Common myeloid progenitor, CD34-positive (primary cell): ENCODE measurements at regions of chr13 and their contacts with region 1.

Region 1: DNA sequence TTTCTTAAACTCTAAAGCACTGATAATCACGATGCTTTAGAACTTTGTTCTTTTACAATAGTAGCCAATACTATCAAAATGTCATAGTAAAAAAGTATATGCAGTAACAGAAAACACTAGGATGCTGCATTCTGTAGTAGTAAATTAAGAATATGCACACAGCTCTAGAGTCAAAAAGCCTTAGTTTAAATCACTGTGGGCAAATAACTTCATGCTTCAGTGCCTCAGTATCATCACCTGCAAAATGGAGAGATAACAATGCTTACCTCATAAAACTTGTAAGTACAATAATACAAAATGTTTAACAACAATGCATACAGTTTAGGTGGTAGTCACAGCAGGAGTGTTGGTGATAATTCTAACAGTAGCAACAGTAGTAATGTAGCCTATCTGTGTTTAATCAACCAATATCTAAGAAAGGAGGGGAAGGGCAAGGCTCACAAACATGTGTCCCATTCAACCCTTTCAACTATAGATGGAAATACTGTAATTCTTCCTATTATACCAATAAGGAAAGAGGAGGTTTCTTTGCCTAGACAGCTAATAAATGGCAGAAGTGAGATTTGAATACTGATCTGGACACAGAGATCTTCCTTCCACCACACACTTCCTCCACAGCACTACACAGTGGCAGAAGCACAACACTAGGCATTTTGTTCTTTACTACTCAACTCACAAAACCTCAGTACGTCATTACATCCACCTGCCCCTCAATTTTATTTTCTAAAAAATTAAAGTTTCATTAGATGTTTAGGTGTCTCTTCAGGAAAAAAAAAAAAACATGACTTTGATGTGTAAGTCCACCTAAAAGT is 4.6 kb downstream of the RBM26 start:
- DNase-seq: peak in 2 of 3 donors; percentile 26 to 46
- H3K4me3 ChIP-seq: peak overlapping the region in 1 of 7 experiments; percentile 19
- H3K27ac ChIP-seq: no peak overlapping the region
- H3K4me1 ChIP-seq: peaks cover 34 to 49% (median 36%) of the 10 kb centered on the region in 4 experiments
- H3K27me3 ChIP-seq: no peaks in the 10 kb centered on the region

Region 2: GRCh38 chr13:78398743-78399410 is 1002.6 kb before region 1 on chr13:
- CTCF ChIA-PET with region 1: no interaction called
- POLR2A ChIA-PET with region 1: no interaction called
- DNase-seq: no peak
- H3K4me3 ChIP-seq: no peak overlapping the region
- H3K27ac ChIP-seq: no peak overlapping the region
- H3K4me1 ChIP-seq: no peaks in the 10 kb centered on the region
- H3K27me3 ChIP-seq: peaks cover 0 to 2% (median 0%) of the 10 kb centered on the region in 5 experiments

Region 3: DNA sequence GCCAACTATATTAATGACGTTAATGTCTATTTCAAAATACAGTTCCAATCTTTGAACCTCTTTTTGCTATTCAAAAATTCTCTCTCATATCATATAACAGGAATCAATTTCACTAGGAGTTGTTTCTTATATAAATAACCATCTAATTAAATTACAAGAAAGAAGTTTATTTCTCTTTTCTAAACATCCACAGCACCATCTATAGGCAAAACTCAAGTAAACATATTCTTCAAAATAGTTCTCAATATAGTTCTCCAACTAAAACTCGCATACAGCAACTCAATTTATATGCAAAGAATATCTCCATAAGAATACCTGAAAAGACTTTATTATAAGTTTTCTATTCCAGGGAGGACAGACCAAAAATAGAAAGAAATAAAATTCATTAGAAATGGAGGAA is 61.0 kb before region 1 on chr13:
- CTCF ChIA-PET with region 1: no interaction called
- POLR2A ChIA-PET with region 1: no interaction called
- DNase-seq: no peak
- H3K4me3 ChIP-seq: no peak overlapping the region
- H3K27ac ChIP-seq: no peak overlapping the region
- H3K4me1 ChIP-seq: no peaks in the 10 kb centered on the region
- H3K27me3 ChIP-seq: no peaks in the 10 kb centered on the region

Region 4: GRCh38 chr13:79385694-79386093 is 15.8 kb before region 1 on chr13:
- CTCF ChIA-PET with region 1: interaction called, 28 read pairs
- POLR2A ChIA-PET with region 1: interaction called, 3 read pairs
- DNase-seq: peak in 2 of 3 donors; percentile 62 to 72
- H3K4me3 ChIP-seq: no peak overlapping the region
- H3K27ac ChIP-seq: no peak overlapping the region
- H3K4me1 ChIP-seq: peaks cover 7 to 36% (median 21%) of the 10 kb centered on the region in 4 experiments
- H3K27me3 ChIP-seq: no peaks in the 10 kb centered on the region